ENCODE measurements at regions of chr3 and their contacts with region 1.

Region 1: DNA sequence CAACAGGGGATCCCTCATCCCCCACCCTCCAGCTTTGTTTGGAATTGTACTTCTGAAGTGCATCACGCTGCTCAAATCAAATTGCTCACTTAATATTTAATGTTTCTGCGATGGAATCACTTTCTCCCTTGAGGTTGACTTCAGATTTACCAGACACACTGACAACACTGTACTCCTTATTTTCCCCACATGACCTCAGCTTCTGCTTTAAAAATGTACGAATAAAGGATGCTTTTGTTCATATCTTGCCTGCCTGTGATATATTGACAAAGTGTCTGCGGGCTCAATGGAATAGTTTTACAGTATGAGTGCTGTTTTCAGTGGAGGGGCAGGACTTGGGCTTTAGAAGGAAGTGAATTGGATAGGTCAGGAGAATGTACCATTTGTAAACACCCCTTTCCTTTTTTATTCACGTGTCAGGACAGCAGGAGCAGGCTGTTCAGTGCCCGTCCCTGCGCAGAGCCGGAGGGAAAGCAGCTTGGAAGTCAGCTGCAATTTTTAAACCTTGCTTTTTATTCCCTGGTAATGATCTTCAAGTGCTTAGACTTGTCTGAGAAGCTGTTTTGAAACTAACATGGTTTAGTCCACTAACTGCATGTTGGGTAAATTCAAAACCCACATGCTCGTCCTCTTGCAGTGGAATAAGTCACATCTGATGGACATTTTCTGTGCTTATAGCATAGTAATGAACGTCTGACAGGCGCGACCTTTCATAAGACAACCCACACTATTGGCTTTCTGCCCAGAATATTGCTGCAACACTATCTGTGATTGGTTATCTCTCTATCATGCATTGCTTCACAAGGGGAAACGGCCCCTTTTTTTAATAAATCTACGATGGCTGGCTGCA is 29.9 kb downstream of the MBNL1 start:
- DNase-seq: peak in 8 of 9 experiments; percentile 34 to 91 (median 60)
- ATAC-seq: peak; percentile 77
- H3K4me3 ChIP-seq: peak overlapping the region; percentile 4 to 16
- H3K4me3 Mint-ChIP-seq: peak overlapping the region; percentile 78
- H3K27ac ChIP-seq: peak overlapping the region; percentile 38 to 73
- H3K27ac Mint-ChIP-seq: peak overlapping the region; percentile 92
- H3K4me1 ChIP-seq: peaks cover 87% of the 10 kb centered on the region
- H3K4me1 Mint-ChIP-seq: peaks cover 80% of the 10 kb centered on the region
- H3K27me3 ChIP-seq: no peaks in the 10 kb centered on the region
- H3K27me3 Mint-ChIP-seq: no peaks in the 10 kb centered on the region
- CTCF ChIP-seq: no peak

Region 2: GRCh38 chr3:152193673-152194267 is 104.8 kb before region 1 on chr3:
- CTCF ChIA-PET with region 1: no interaction called
- POLR2A ChIA-PET with region 1: no interaction called
- intact Hi-C with region 1: loop called in 1 of 2 experiments (anchors 5 kb)
- DNase-seq: peak in 4 of 9 experiments; percentile 20 to 82 (median 51)
- ATAC-seq: peak; percentile 65
- H3K4me3 ChIP-seq: peak overlapping the region; percentile 54 to 59
- H3K4me3 Mint-ChIP-seq: peak overlapping the region; percentile 83
- H3K27ac ChIP-seq: peak overlapping the region; percentile 62 to 80
- H3K27ac Mint-ChIP-seq: peak overlapping the region; percentile 90
- H3K4me1 ChIP-seq: peaks cover 65% of the 10 kb centered on the region
- H3K4me1 Mint-ChIP-seq: peaks cover 76% of the 10 kb centered on the region
- H3K27me3 ChIP-seq: no peaks in the 10 kb centered on the region
- H3K27me3 Mint-ChIP-seq: no peaks in the 10 kb centered on the region
- CTCF ChIP-seq: no peak

Region 3: DNA sequence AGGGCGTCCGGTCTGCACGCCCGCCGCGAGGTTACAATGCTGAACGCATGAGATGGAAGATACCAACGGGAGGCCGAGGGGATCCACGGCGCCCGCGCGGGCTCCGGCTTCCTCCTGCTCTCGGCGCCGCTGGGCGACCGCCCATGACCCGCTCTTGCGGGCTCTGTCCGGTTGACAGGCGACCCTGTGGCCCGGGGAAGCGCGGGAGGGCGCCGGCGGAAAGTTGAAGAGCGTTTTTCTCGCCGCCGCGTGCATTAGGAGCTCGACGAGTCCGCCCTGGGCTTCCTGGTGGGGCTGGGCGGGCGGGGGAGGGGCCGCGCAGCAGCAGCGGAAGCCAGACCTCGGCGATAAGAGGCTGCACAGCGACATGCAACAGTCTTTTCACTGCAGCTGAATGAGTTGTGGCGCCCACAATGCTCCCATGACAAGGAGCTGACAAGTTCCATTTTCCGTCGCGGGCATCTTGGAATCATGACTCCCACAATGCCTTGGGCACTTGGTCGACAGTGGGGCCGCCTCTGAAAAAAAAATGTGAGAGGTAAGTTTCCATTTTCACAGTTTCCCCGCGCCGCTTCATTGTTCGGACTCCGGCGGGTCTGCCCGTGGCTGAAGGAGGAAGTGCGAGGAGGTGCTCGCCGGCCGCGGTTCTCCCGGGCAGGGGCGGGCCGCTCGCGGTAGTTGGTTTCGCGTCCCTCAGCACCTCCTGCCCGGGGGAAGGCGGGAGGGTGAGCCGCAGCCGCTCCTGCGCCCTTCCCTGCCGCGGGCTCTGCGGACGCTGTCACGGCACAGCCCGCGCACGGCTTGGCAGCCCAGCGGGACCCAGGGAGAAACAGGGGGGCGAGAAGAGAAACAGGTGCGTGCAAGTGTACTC is 29.8 kb before region 1 on chr3 and contains the start of gene MBNL1:
- CTCF ChIA-PET with region 1: no interaction called
- POLR2A ChIA-PET with region 1: interaction called, 6 read pairs
- intact Hi-C with region 1: loop called (anchors 1 to 2 kb)
- DNase-seq: peak; percentile 67 to 95 (median 84)
- ATAC-seq: peak; percentile 54
- H3K4me3 ChIP-seq: peak within 1 kb of the TSS; percentile 92 to 94
- H3K4me3 Mint-ChIP-seq: peak within 1 kb of the TSS; percentile 96
- H3K27ac ChIP-seq: peak within 1 kb of the TSS; percentile 89 to 96
- H3K27ac Mint-ChIP-seq: peak within 1 kb of the TSS; percentile 95
- H3K4me1 ChIP-seq: peaks cover 50% of the 10 kb centered on the region
- H3K4me1 Mint-ChIP-seq: peaks cover 61% of the 10 kb centered on the region
- H3K27me3 ChIP-seq: no peaks in the 10 kb centered on the region
- H3K27me3 Mint-ChIP-seq: no peaks in the 10 kb centered on the region
- CTCF ChIP-seq: no peak
- total RNA-seq, gene MBNL1: 515 to 529 TPM

Region 4: GRCh38 chr3:152309535-152310307 is 11.1 kb after region 1 on chr3:
- CTCF ChIA-PET with region 1: no interaction called
- POLR2A ChIA-PET with region 1: interaction called, 11 read pairs
- intact Hi-C with region 1: loop called in 1 of 2 experiments (anchors 1 kb)
- DNase-seq: peak in 2 of 9 experiments; percentile 40 to 57
- ATAC-seq: peak; percentile 89
- H3K4me3 ChIP-seq: no peak overlapping the region
- H3K4me3 Mint-ChIP-seq: peak overlapping the region; percentile 20
- H3K27ac ChIP-seq: peak overlapping the region in 1 of 2 experiments; percentile 56
- H3K27ac Mint-ChIP-seq: peak overlapping the region; percentile 84
- H3K4me1 ChIP-seq: peaks cover 72% of the 10 kb centered on the region
- H3K4me1 Mint-ChIP-seq: peaks cover 80% of the 10 kb centered on the region
- H3K27me3 ChIP-seq: no peaks in the 10 kb centered on the region
- H3K27me3 Mint-ChIP-seq: no peaks in the 10 kb centered on the region
- CTCF ChIP-seq: no peak

Region 5: DNA sequence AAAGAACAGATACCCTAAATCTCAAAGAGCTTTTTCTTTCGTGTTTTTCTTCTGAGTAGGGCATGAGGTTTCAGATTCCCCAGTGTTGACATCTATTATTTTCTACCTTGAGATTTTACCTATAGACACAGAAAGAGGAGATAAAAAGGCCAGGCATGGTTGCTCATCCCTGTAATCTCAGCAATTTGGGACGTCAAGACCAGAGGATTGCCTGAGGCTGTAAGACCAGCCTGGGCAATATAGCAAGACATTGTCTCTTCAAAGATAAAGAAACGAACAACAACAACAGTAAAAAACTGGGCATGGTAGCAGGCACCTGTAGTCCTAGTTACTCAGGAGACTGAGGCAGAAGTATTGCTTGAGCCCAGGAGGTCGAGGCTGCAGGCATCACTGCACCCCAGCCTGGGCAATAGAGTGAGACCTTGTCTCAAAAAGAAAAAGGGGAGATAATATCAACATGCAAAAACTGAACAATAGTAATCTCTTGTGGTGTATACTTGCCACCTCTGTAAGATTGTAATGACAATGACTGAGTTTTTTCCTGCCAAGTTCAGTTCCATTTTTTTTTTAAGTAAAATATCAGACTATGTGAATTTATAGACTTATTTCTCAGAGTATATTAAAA is 41.4 kb after region 1 on chr3:
- CTCF ChIA-PET with region 1: no interaction called
- POLR2A ChIA-PET with region 1: no interaction called
- intact Hi-C with region 1: loop called in 1 of 2 experiments (anchors 5 kb)
- DNase-seq: no peak
- ATAC-seq: no peak
- H3K4me3 ChIP-seq: no peak overlapping the region
- H3K4me3 Mint-ChIP-seq: no peak overlapping the region
- H3K27ac ChIP-seq: no peak overlapping the region
- H3K27ac Mint-ChIP-seq: peak overlapping the region; percentile 80
- H3K4me1 ChIP-seq: peaks cover 40% of the 10 kb centered on the region
- H3K4me1 Mint-ChIP-seq: peaks cover 76% of the 10 kb centered on the region
- H3K27me3 ChIP-seq: no peaks in the 10 kb centered on the region
- H3K27me3 Mint-ChIP-seq: no peaks in the 10 kb centered on the region
- CTCF ChIP-seq: no peak

Region 6: DNA sequence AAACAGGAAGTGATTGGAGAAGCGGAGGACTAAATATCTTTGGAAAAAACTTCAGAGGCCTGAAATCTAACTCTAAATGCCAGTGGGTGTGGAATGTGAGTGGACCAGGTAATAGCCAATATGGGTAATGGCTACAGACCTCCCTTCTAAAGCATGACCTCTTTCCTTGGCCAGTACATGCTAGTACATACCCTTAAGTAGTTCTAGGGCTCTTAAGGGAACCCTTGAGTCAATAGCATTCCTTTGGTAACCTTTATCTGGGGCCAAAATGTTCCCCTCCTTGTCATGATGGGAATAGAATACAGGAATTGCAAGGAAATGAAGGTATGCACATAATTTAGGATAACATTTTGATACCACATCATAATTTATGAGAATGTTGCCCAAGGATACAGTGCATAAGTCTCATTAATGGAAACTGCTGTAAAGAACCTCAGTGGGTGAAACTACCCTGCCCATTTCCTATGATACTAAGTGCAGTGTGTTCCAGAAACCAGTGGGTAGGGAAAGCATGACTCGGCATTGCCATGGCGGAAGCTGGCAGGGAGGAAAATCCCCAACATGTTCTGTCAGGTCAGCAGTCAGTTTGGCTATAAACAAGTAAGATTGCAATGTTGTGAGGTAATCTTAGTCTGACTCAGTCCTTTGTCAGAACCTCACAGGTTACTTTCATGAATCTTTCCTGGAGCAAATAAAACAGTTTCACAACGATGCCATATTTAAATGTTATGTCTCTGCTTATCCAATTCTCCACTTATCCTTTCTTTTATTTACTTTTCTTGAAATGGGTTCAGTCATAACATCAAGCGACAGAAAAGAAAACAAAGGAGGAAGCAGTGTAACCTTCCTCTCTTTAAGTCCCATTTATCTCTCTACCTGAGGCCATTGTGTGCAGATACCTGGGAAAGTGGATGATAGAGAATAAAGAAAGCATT is 839.9 kb after region 1 on chr3:
- CTCF ChIA-PET with region 1: no interaction called
- POLR2A ChIA-PET with region 1: no interaction called
- intact Hi-C with region 1: no loop called
- DNase-seq: peak in 1 of 9 experiments; percentile 35
- ATAC-seq: no peak
- H3K4me3 ChIP-seq: no peak overlapping the region
- H3K4me3 Mint-ChIP-seq: no peak overlapping the region
- H3K27ac ChIP-seq: no peak overlapping the region
- H3K27ac Mint-ChIP-seq: no peak overlapping the region
- H3K4me1 ChIP-seq: no peaks in the 10 kb centered on the region
- H3K4me1 Mint-ChIP-seq: peaks cover 1% of the 10 kb centered on the region
- H3K27me3 ChIP-seq: no peaks in the 10 kb centered on the region
- H3K27me3 Mint-ChIP-seq: peaks cover 4% of the 10 kb centered on the region
- CTCF ChIP-seq: no peak

Measured in CD8-positive, alpha-beta T cell (primary cell).